ENCODE measurements at regions of chr15 and their contacts with region 1.

Region 1: DNA sequence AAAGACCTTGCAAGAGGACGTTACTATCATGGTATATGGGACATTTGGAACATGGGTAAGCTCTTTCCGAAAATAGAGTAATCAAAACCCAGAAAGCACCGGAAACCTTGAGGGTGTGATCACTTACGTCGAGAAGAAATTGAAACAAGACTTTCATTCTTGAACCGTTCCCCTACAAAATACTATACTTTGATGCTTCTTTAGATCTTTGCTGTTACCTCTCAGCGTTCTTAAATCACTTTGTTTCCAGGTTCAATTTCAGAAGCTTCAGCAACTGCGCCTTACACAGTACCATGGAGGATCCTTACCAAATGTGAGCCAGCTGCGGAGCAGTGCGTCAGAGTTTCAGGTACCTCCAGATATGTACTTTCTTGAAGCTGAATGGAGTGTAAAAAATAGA is 10.1 kb downstream of the CRTC3 start:
- DNase-seq: no peak
- ATAC-seq: no peak

Region 2: DNA sequence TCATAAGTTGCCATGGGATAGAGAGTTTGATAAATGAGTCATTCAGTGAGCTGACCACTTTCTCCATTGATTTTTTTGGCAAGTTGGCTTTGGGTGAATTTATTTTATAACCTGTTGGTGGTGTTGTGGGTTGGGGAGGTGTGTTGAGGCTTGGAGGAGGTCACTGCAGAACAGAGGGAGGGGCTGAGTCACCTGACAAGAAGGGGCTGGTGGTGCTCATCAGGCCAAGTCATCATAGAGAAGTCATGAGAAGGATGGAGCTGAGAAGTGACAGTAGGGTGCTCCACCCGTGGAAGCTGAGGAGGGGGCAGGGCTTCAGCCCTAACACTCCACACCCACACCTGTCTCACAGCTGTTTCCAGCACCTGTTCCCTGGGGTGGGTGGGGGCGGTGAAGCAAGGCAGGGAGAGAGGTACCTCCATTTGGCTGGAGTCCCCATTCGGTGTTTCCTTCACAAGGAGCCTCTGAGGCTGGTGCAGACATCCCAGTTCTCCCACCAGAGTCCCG is 1053.9 kb before region 1 on chr15:
- intact Hi-C with region 1: no loop called
- DNase-seq: no peak
- ATAC-seq: no peak

Region 3: GRCh38 chr15:90610190-90610589 is 70.4 kb after region 1 on chr15:
- intact Hi-C with region 1: loop called in 1 of 2 experiments (anchors 5 kb)
- DNase-seq: no peak
- ATAC-seq: no peak